ENCODE measurements at regions of chr11 and their contacts with region 1.

Region 1: GRCh38 chr11:75031771-75032549 is 43.2 kb downstream of the NEU3 start:
- DNase-seq: peak; percentile 72 to 88 (median 88)
- ATAC-seq: peak; percentile 53 to 79
- H3K4me3 ChIP-seq: no peak overlapping the region
- H3K27ac ChIP-seq: no peak overlapping the region
- H3K4me1 ChIP-seq: no peaks in the 10 kb centered on the region
- H3K27me3 ChIP-seq: no peaks in the 10 kb centered on the region

Region 2: GRCh38 chr11:74806267-74806666 is 225.7 kb before region 1 on chr11:
- intact Hi-C with region 1: no loop called
- DNase-seq: no peak
- ATAC-seq: peak in 1 of 2 donors; percentile 40
- H3K4me3 ChIP-seq: no peak overlapping the region
- H3K27ac ChIP-seq: no peak overlapping the region
- H3K4me1 ChIP-seq: peaks cover 2% of the 10 kb centered on the region
- H3K27me3 ChIP-seq: no peaks in the 10 kb centered on the region

Region 3: DNA sequence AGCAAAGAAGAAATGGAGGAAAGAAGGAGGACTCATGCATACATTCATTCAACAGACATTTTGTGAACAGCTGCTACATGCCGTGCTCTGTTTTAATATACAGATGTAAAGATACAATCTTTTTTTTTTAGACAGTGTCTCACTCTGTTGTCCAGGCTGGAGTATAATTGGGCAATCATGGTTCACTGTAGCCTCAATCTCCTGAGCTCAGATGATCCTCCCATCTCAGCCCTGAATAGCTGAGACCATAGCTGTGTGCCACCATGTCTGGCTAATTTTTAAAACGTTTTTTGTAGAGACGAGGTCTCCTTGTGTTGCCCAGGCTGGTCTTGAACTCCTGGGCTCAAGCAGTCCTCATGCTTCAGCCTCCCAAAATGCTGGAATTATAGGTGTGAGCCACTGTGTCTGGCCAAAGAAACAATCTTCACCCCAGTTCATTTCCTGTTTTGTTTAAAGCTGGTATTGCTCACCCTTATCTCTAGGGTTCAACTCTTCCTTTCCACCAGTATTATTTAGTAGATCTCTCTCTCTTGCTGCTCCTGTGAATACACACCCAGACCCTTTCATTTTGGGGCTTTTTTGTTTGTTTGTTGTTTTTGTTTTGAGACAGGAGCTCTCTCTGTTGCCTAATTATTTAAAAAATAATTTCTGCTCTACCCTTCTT is 213.5 kb before region 1 on chr11:
- intact Hi-C with region 1: no loop called
- DNase-seq: no peak
- ATAC-seq: no peak
- H3K4me3 ChIP-seq: no peak overlapping the region
- H3K27ac ChIP-seq: no peak overlapping the region
- H3K4me1 ChIP-seq: peaks cover 2% of the 10 kb centered on the region
- H3K27me3 ChIP-seq: no peaks in the 10 kb centered on the region

Region 4: GRCh38 chr11:74929431-74930363 is 102.3 kb before region 1 on chr11:
- intact Hi-C with region 1: loop called (anchors 2 to 5 kb)
- DNase-seq: peak in 2 of 3 donors; percentile 53 to 79
- ATAC-seq: peak; percentile 85 to 87
- H3K4me3 ChIP-seq: no peak overlapping the region
- H3K27ac ChIP-seq: no peak overlapping the region
- H3K4me1 ChIP-seq: no peaks in the 10 kb centered on the region
- H3K27me3 ChIP-seq: no peaks in the 10 kb centered on the region

Measured in right cardiac atrium (tissue), 5 donors.